Ascending aorta (tissue), 2 donors: ENCODE measurements at regions of chr2 and their contacts with region 1.

Region 1: GRCh38 chr2:239991689-239992314 is 33.3 kb downstream of the NDUFA10 start:
- DNase-seq: no peak
- H3K4me3 ChIP-seq: no peak overlapping the region
- H3K27ac ChIP-seq: peak overlapping the region in 1 of 2 donors; percentile 44
- H3K4me1 ChIP-seq: no peaks in the 10 kb centered on the region
- H3K27me3 ChIP-seq: no peaks in the 10 kb centered on the region
- CTCF ChIP-seq: peak; percentile 73 to 80 (median 76)

Region 2: GRCh38 chr2:239035361-239036078 is 956.3 kb before region 1 on chr2:
- intact Hi-C with region 1: loop called (anchors 2 kb)
- DNase-seq: no peak
- H3K4me3 ChIP-seq: no peak overlapping the region
- H3K27ac ChIP-seq: no peak overlapping the region
- H3K4me1 ChIP-seq: no peaks in the 10 kb centered on the region
- H3K27me3 ChIP-seq: no peaks in the 10 kb centered on the region
- CTCF ChIP-seq: peak; percentile 72 to 98 (median 94)

Region 3: GRCh38 chr2:239143858-239144718 is 847.7 kb before region 1 on chr2:
- intact Hi-C with region 1: loop called (anchors 10 kb)
- DNase-seq: no peak
- H3K4me3 ChIP-seq: no peak overlapping the region
- H3K27ac ChIP-seq: no peak overlapping the region
- H3K4me1 ChIP-seq: peaks cover 0 to 3% of the 10 kb centered on the region in 2 donors
- H3K27me3 ChIP-seq: no peaks in the 10 kb centered on the region
- CTCF ChIP-seq: peak; percentile 53 to 58 (median 54)

Region 4: DNA sequence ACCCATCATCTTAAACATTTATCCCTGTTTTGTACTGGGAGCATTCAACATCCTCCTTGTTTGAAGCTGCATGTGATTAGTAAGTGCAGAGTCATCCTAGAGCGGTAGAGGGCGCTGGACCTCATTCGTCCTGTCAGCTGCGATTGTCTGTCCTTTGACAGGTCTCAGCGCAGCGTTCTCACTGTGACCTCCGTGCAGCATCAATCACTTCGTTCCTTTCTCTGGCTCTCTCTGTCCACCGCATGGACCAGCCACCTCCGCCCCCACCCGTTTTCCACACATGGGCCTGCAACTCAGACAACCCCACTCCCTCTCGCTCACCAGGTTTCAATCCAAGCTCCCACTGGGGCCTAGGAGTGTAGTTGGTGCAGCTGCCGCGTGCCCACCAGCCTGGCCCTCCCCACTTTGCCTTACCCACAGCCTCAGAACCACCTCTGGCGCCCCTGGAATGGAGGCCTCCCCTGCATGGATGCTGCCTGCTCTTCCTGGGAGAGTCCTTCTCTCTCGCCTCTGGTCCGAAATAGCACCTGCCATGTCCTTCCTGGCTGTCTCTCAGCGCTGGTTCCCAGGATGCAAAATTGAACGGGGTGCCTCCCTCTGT is 57.1 kb before region 1 on chr2:
- intact Hi-C with region 1: loop called (anchors 1 kb)
- DNase-seq: peak in 1 of 2 donors; percentile 83
- H3K4me3 ChIP-seq: no peak overlapping the region
- H3K27ac ChIP-seq: no peak overlapping the region
- H3K4me1 ChIP-seq: no peaks in the 10 kb centered on the region
- H3K27me3 ChIP-seq: no peaks in the 10 kb centered on the region
- CTCF ChIP-seq: peak; percentile 62 to 74 (median 66)

Region 5: GRCh38 chr2:239953418-239954061 is 38.3 kb before region 1 on chr2:
- intact Hi-C with region 1: no loop called
- DNase-seq: peak; percentile 34 to 79
- H3K4me3 ChIP-seq: peak overlapping the region in 1 of 2 donors; percentile 46
- H3K27ac ChIP-seq: peak overlapping the region; percentile 90 to 92
- H3K4me1 ChIP-seq: peaks cover 10 to 23% of the 10 kb centered on the region in 2 donors
- H3K27me3 ChIP-seq: no peaks in the 10 kb centered on the region
- CTCF ChIP-seq: peak in 1 of 3 experiments; percentile 9

Region 6: DNA sequence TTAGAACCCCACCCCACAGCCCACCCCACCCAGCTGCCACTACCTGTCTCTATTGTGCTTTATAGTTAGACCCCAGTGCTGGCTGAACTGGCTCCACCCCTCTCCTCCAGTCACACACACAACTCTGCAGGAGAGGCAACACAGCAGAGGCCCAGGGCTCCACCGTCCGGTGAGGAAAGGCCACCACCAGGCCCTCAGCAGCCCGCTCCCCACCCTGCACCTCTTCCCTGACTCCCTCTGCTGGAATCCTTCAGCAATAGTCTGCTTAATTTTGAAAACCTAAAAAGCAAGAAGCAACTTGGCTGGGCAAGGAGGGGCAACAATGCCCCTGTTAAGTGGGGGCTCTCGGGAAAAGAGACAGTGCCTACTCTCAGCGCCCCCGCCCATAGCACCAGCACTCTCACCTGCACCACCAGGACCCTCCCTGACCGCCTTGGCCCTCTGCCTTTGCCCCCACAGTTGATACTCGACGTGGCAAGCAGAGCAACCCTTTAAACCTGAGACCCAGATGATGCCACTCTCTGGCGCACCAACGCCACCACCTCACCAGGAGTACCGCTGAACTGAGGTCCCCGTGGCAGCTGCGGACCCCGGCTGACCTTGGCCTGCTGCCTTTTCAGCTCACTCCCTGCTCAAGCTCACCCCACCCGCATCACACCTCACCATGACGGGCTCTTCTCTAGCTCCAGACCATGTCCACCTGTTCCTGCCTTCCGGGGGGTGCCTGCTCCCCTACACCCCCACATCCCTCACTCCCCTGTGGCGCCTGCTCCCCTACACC is 12.4 kb before region 1 on chr2:
- intact Hi-C with region 1: no loop called
- DNase-seq: no peak
- H3K4me3 ChIP-seq: no peak overlapping the region
- H3K27ac ChIP-seq: no peak overlapping the region
- H3K4me1 ChIP-seq: no peaks in the 10 kb centered on the region
- H3K27me3 ChIP-seq: no peaks in the 10 kb centered on the region
- CTCF ChIP-seq: peak in 1 of 3 experiments; percentile 7